Activated naive CD4-positive, alpha-beta T cell treated with anti-CD3 and anti-CD28 coated beads, Interleukin-2, amount 10 ng/mL, durations not matched to agents 7 days and 5 days (primary cell): ENCODE measurements at regions of chr11 and their contacts with region 1.

Region 1: DNA sequence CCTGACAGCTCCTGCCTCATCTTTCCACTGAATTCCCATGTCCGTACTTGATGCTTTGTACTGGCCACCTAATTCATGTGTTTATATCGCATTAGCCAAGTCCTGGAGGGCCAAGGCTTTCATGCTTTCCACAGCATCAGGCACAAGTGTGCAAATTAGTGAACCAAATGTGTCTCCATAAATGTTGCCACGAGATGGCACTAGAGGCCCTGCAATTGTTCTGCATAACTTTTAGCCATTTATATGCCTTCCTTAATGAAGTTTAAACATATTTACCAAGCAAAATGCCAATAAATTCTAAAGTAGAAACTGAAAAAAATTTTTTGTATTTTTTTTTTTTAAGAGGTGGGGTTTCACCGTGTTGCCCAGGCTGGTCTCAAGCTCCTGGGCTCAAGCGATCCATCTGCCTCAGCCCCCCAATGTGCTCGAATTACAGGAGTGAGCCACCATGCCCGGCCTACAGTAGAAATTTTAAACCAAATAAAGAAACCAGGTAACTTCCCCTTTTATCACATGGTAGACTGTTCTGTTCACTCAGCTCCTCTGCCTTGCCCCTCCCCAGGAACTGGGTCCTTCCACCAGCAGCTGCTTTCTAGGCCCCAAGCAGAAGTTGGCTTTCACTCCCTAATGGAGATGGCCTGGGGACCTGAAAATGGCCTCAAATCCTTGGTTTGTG is 20.8 kb upstream of the IL18BP start:
- DNase-seq: peak; percentile 72
- H3K4me3 Mint-ChIP-seq: no peak overlapping the region
- H3K27ac Mint-ChIP-seq: no peak overlapping the region
- H3K4me1 Mint-ChIP-seq: no peaks in the 10 kb centered on the region
- H3K27me3 Mint-ChIP-seq: no peaks in the 10 kb centered on the region

Region 2: GRCh38 chr11:71988050-71988449 is 10.2 kb after region 1 on chr11:
- CTCF ChIA-PET with region 1: interaction called, 39 read pairs
- DNase-seq: no peak
- H3K4me3 Mint-ChIP-seq: no peak overlapping the region
- H3K27ac Mint-ChIP-seq: no peak overlapping the region
- H3K4me1 Mint-ChIP-seq: peaks cover 10% of the 10 kb centered on the region
- H3K27me3 Mint-ChIP-seq: no peaks in the 10 kb centered on the region

Region 3: DNA sequence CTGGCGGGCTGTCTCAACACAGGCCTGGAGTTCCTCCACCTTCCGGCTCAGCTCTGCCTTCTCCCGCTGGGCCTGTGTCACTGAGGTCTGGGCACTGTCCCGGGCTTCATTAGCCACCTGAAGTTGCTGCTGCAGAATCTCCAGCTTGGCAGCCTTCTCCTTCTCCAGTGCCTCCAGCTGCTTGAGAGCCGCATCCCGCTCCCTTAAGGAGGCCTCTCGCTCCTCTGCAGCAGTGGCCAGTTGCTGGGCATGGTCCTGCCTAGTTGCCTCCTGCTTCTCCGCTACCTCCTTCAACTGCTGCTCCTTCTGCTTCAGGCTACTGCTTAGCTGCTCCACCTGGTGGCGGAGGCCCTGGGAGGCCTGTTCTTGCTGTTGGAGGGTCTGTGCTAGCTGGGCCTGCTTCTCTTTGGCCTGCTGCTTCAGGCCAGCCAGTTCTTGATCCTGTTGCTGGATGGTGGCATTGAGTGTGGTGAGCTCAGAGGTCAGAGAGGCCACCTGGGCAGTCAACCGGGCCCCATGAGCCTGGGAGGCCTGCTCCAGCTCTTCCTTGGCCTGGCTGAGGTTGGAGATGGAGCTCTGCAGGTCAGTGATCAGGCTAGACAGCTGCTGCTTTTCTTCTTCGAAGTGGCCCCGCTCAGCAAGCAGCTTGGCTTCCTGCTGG is 37.8 kb after region 1 on chr11:
- CTCF ChIA-PET with region 1: interaction called, 32 read pairs
- DNase-seq: no peak
- H3K4me3 Mint-ChIP-seq: no peak overlapping the region
- H3K27ac Mint-ChIP-seq: peak overlapping the region; percentile 69
- H3K4me1 Mint-ChIP-seq: no peaks in the 10 kb centered on the region
- H3K27me3 Mint-ChIP-seq: no peaks in the 10 kb centered on the region

Region 4: GRCh38 chr11:72085621-72086351 is 107.9 kb after region 1 on chr11:
- CTCF ChIA-PET with region 1: interaction called, 24 read pairs
- DNase-seq: no peak
- H3K4me3 Mint-ChIP-seq: no peak overlapping the region
- H3K27ac Mint-ChIP-seq: no peak overlapping the region
- H3K4me1 Mint-ChIP-seq: peaks cover 27% of the 10 kb centered on the region
- H3K27me3 Mint-ChIP-seq: no peaks in the 10 kb centered on the region

Region 5: GRCh38 chr11:72144807-72145560 is 167.1 kb after region 1 on chr11:
- CTCF ChIA-PET with region 1: interaction called, 21 read pairs
- DNase-seq: no peak
- H3K4me3 Mint-ChIP-seq: no peak overlapping the region
- H3K27ac Mint-ChIP-seq: no peak overlapping the region
- H3K4me1 Mint-ChIP-seq: no peaks in the 10 kb centered on the region
- H3K27me3 Mint-ChIP-seq: peaks cover 33% of the 10 kb centered on the region